MCF 10A (cell line): ENCODE measurements at regions of chr19 and their contacts with region 1.

Region 1: DNA sequence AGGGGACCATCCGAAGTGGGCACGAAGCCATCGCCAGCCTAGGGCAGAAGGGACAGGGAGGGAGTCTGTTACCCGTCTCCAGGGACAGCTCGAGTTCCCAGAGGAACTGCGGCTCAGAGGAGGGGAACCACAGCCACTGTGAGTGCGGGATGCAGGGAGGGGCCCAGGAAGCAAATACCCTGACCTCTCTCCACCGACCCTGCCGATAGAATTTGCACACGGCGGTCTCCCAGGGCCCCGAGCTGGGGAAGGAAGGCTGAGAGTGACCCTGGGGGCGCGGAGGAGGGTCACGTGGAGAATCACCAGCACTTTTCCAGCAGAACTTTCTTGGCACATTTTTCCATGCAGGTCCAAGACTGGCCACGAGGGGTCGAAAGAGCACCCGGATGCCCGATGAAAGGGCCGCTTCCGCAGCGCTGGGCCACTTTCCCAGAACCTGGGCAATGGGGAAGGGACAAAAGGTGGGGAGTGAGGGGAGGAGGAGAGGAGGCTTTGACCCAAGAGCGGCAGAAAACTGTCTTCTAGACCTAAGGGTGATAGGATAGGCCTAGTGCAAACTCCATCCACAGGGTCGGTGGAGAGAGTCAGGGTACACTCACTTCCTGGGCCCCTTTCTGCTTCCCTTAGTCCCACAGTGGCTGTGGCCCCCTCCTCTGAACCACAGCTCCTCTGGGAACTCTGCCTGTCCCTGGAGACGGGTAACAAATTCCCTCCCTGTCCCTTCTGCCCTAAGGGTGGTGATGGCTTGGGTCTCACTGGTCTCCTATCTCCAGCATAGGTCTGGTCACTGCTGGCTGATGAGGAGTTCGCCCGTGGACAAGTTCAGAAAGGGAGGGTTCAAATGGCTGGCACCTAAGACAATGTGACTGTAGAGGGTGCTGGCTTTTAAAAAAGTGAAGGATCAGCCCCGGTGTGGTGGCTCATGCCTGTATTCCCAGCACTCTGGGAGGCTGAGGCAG is 5.3 kb upstream of the GPR4 start:
- DNase-seq: peak; percentile 77
- H3K4me3 Mint-ChIP-seq: no peak overlapping the region
- H3K27ac Mint-ChIP-seq: peak overlapping the region; percentile 80
- H3K4me1 Mint-ChIP-seq: peaks cover 8% of the 10 kb centered on the region
- H3K27me3 Mint-ChIP-seq: peaks cover 7% of the 10 kb centered on the region
- CTCF ChIP-seq: peak; percentile 74

Region 2: GRCh38 chr19:45637890-45638667 is 30.7 kb after region 1 on chr19:
- CTCF ChIA-PET with region 1: interaction called, 99 read pairs
- POLR2A ChIA-PET with region 1: interaction called, 88 read pairs
- intact Hi-C with region 1: loop called (anchors 1 kb)
- DNase-seq: peak; percentile 73
- H3K4me3 Mint-ChIP-seq: peak overlapping the region; percentile 89
- H3K27ac Mint-ChIP-seq: peak overlapping the region; percentile 81
- H3K4me1 Mint-ChIP-seq: peaks cover 23% of the 10 kb centered on the region
- H3K27me3 Mint-ChIP-seq: no peaks in the 10 kb centered on the region
- CTCF ChIP-seq: no peak

Region 3: DNA sequence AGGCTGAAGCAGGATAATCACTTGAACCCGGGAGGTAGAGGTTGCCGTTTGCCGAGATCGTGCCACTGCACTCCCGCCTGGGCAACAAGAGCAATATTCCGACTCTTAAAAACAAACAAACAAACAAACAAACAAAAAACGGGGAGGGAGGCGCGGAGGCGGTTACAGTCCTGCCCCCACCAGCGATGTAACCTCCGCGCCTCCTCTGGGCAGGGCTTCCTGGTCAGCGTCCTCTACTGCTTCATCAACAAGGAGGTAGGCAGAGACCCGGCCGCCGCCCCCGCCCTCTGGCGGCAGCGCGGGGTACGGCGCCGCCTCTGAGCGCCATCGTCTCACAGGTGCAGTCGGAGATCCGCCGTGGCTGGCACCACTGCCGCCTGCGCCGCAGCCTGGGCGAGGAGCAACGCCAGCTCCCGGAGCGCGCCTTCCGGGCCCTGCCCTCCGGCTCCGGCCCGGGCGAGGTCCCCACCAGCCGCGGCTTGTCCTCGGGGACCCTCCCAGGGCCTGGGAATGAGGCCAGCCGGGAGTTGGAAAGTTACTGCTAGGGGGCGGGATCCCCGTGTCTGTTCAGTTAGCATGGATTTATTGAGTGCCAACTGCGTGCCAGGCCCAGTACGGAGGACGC is 74.2 kb after region 1 on chr19:
- CTCF ChIA-PET with region 1: interaction called, 3 read pairs
- POLR2A ChIA-PET with region 1: no interaction called
- intact Hi-C with region 1: loop called (anchors 10 kb)
- DNase-seq: peak; percentile 89
- H3K4me3 Mint-ChIP-seq: peak overlapping the region; percentile 72
- H3K27ac Mint-ChIP-seq: peak overlapping the region; percentile 61
- H3K4me1 Mint-ChIP-seq: peaks cover 11% of the 10 kb centered on the region
- H3K27me3 Mint-ChIP-seq: no peaks in the 10 kb centered on the region
- CTCF ChIP-seq: peak; percentile 92